HEK293T (cell line): ENCODE measurements at regions of chr10 and their contacts with region 1.

Region 1: DNA sequence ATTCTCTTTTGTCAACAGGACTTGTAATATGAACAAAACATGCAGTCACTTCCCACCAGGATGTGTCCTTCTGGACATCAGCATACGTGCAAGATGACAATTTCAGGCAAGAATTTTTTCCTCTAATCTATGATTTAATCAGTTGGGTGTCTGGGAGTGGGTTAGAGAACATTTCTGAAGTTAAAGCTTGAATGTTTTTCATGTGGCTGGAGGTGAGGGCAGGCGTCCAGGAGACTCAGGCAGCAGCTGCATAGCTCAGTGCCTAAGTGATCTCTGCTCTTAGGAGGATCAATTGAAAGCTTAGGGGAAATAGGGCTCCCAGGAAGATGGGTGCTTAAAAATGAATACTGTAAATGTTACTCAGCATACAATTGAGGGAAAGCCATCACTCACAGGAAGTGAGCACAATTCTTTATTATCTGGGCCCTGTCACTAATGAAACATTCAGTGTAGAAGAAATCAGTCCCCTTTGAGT is 457.6 kb upstream of the KLF6 start:
- DNase-seq: no peak

Region 2: DNA sequence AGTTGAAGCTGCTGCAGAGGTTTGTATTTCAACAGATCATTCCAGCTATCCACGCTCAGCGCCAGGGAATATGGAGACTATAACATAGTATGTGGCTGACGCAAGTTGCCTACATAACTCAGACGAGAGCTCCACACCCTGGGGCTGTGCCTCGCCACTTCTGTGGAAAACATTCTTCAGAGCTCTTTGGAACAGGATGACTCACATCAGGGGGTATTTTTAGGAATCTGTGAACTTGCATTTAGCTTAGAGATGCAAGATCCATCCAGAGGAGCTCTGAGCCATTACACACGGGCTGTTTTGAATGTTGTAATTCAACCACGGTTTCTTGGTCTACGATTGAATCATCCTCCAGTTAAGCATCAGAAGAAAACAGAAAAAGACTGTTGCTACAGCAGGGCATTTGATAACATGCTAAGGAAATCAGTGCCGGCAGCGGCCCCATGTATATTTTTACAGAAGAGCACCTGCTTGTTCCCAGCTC is 102.0 kb after region 1 on chr10:
- CTCF ChIA-PET with region 1: interaction called, 10 read pairs
- POLR2A ChIA-PET with region 1: no interaction called
- DNase-seq: no peak